WTC11 (cell line): ENCODE measurements at regions of chr18 and their contacts with region 1.

Region 1: DNA sequence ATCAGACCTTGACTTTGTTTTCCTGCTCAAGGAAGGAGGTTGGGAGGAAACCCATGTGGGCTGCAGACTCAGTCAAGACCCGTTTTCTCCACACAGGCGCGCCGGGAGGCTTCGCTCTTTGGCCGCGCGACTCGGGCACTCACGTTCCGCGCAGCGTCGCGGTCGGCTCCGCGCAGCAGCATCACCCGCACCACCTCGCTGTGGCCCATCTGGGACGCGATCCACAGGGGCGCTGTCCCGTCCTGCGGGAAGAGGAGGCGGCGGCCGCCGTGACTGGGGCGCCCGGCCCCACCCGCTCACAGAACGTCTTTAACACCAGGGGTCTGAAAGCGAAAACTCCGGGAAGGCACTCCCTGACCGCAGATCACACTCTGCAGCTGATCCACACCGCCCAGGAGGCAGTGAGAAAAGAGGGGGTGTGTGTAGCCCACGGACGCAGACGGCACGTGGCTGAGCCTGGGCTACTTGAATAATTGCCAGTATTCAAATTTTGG is 33.1 kb upstream of the NPC1 start:
- DNase-seq: peak; percentile 49
- ATAC-seq: peak; percentile 54
- H3K4me3 Mint-ChIP-seq: peak overlapping the region; percentile 72
- H3K27ac Mint-ChIP-seq: no peak overlapping the region
- H3K4me1 Mint-ChIP-seq: peaks cover 11% of the 10 kb centered on the region
- H3K27me3 Mint-ChIP-seq: peaks cover 40% of the 10 kb centered on the region
- CTCF ChIP-seq: no peak

Region 2: GRCh38 chr18:23487738-23488570 is 131.5 kb before region 1 on chr18:
- CTCF ChIA-PET with region 1: no interaction called
- POLR2A ChIA-PET with region 1: no interaction called
- DNase-seq: no peak
- ATAC-seq: peak; percentile 43
- H3K4me3 Mint-ChIP-seq: no peak overlapping the region
- H3K27ac Mint-ChIP-seq: no peak overlapping the region
- H3K4me1 Mint-ChIP-seq: peaks cover 17% of the 10 kb centered on the region
- H3K27me3 Mint-ChIP-seq: no peaks in the 10 kb centered on the region
- CTCF ChIP-seq: no peak

Region 3: DNA sequence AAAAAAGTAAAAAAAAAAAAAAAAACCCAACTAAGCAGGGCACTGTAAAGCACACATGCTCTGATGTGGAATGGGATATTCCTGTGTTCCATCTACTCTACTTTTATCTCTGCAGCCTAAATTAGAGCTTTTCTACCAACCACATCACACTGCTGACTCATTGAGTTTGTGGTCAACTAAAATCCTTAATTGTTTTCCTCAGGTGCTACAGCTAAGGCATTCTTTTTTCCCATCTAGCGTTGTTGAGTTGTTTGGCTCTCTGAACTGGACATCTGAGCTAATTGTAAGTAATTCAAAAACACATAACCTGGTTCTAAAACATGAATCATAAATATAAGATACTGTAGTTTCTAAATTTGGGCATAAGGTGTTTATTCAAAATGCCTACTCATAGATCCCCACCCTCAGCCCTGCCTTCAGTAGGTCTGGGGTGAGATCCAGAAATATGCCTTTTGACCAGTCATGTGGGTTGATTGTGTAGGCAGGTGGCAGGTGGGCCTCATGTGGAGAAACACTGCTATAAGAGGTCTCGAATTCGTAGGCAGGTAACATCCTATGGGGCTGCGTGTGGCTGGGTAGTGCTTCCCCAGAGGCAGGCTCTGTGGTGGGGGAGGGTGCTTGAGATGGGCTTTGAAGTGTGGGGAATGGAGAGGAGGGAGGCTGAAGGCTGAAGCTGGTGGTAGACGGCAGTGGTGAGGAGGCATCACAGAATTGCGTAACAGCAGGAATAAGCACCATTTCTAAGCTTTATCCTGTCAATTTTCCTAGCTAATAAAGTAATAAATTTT is 16.0 kb after region 1 on chr18:
- CTCF ChIA-PET with region 1: interaction called, 15 read pairs
- POLR2A ChIA-PET with region 1: no interaction called
- DNase-seq: peak; percentile 27
- ATAC-seq: peak; percentile 75
- H3K4me3 Mint-ChIP-seq: no peak overlapping the region
- H3K27ac Mint-ChIP-seq: no peak overlapping the region
- H3K4me1 Mint-ChIP-seq: peaks cover 13% of the 10 kb centered on the region
- H3K27me3 Mint-ChIP-seq: no peaks in the 10 kb centered on the region
- CTCF ChIP-seq: no peak